Sigmoid colon (tissue), 7 donors: ENCODE measurements at regions of chr7 and their contacts with region 1.

Region 1: GRCh38 chr7:76047811-76048667 is at the starts of genes MDH2 and STYXL1:
- DNase-seq: peak; percentile 97
- H3K4me3 ChIP-seq: peak within 1 kb of the TSS; percentile 56 to 96 (median 74)
- H3K27ac ChIP-seq: peak within 1 kb of the TSS; percentile 87 to 96 (median 91)
- H3K4me1 ChIP-seq: peaks cover 0 to 51% (median 33%) of the 10 kb centered on the region in 4 donors
- H3K27me3 ChIP-seq: no peaks in the 10 kb centered on the region
- CTCF ChIP-seq: no peak
- EP300 ChIP-seq: peak in 1 of 4 donors; percentile 33
- POLR2A ChIP-seq: peak; percentile 87 to 89
- total RNA-seq, gene MDH2: 73.1 to 90.3 (median 79.2) TPM
- total RNA-seq, gene STYXL1: 9.4 to 30.7 (median 25.5) TPM

Region 2: GRCh38 chr7:76166404-76167255 is 118.6 kb after region 1 on chr7:
- intact Hi-C with region 1: loop called (anchors 10 kb)
- DNase-seq: peak; percentile 99
- H3K4me3 ChIP-seq: peak overlapping the region; percentile 52 to 73 (median 61)
- H3K27ac ChIP-seq: peak overlapping the region; percentile 74 to 87 (median 82)
- H3K4me1 ChIP-seq: peaks cover 0 to 7% (median 5%) of the 10 kb centered on the region in 4 donors
- H3K27me3 ChIP-seq: no peaks in the 10 kb centered on the region
- CTCF ChIP-seq: no peak
- EP300 ChIP-seq: peak in 2 of 4 donors; percentile 64 to 68
- POLR2A ChIP-seq: peak; percentile 88 to 91